Activated naive CD4-positive, alpha-beta T cell treated with anti-CD3 and anti-CD28 coated beads, Interleukin-2, amount 10 ng/mL, durations not matched to agents 7 days and 5 days (primary cell): ENCODE measurements at regions of chr22 and their contacts with region 1.

Region 1: DNA sequence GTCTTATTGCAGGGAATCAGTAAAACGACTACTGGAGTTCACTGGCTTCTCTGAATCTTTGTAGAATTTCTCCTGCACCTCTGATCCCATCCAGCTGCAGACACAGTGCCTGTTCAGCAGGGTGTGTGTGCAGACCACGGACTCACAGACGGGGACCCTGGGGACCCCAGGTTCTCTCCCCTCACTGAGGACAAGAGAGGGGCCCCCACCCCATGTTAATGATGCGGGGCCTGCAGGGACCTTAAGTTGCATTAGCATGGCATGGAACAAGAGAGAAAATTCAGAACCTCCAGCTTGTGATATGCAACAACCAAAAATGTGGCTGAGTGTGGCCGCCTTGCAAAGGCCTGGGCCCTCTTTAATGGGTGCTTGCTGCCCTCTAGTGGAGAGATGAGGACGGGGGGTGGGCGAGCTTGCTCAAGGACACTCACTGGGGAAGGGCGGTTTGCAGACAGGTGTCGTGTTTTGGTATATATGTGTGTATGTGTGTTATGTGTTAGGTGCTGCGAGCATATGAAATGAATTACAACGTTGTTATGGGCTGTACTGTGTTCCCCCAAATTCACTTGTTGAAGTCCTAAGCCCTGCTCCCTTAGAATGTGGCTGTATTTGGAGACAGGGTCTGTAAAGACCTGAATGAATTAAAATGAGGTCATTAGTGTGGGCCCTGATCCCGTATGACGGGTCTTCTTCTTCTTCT is 84.4 kb upstream of the SEPTIN5 start:
- DNase-seq: peak; percentile 93
- H3K4me3 Mint-ChIP-seq: no peak overlapping the region
- H3K27ac Mint-ChIP-seq: no peak overlapping the region
- H3K4me1 Mint-ChIP-seq: peaks cover 13% of the 10 kb centered on the region
- H3K27me3 Mint-ChIP-seq: peaks cover 35% of the 10 kb centered on the region

Region 2: GRCh38 chr22:19479357-19480172 is 150.3 kb before region 1 on chr22 and contains the start of gene CDC45:
- CTCF ChIA-PET with region 1: interaction called, 14 read pairs
- DNase-seq: peak; percentile 98
- H3K4me3 Mint-ChIP-seq: peak within 1 kb of the TSS; percentile 99
- H3K27ac Mint-ChIP-seq: peak within 1 kb of the TSS; percentile 98
- H3K4me1 Mint-ChIP-seq: peaks cover 39% of the 10 kb centered on the region
- H3K27me3 Mint-ChIP-seq: no peaks in the 10 kb centered on the region

Region 3: GRCh38 chr22:19495562-19496323 is 134.1 kb before region 1 on chr22:
- CTCF ChIA-PET with region 1: interaction called, 29 read pairs
- DNase-seq: no peak
- H3K4me3 Mint-ChIP-seq: no peak overlapping the region
- H3K27ac Mint-ChIP-seq: peak overlapping the region; percentile 13
- H3K4me1 Mint-ChIP-seq: peaks cover 10% of the 10 kb centered on the region
- H3K27me3 Mint-ChIP-seq: no peaks in the 10 kb centered on the region

Region 4: GRCh38 chr22:19504900-19505734 is 124.8 kb before region 1 on chr22:
- CTCF ChIA-PET with region 1: interaction called, 10 read pairs
- DNase-seq: peak; percentile 54
- H3K4me3 Mint-ChIP-seq: no peak overlapping the region
- H3K27ac Mint-ChIP-seq: peak overlapping the region; percentile 86
- H3K4me1 Mint-ChIP-seq: peaks cover 33% of the 10 kb centered on the region
- H3K27me3 Mint-ChIP-seq: no peaks in the 10 kb centered on the region

Region 5: GRCh38 chr22:19523240-19524169 is 106.4 kb before region 1 on chr22:
- CTCF ChIA-PET with region 1: interaction called, 14 read pairs
- DNase-seq: peak; percentile 55
- H3K4me3 Mint-ChIP-seq: peak overlapping the region; percentile 68
- H3K27ac Mint-ChIP-seq: peak overlapping the region; percentile 73
- H3K4me1 Mint-ChIP-seq: peaks cover 19% of the 10 kb centered on the region
- H3K27me3 Mint-ChIP-seq: peaks cover 55% of the 10 kb centered on the region